Calu3 (cell line): ENCODE measurements at regions of chr12 and their contacts with region 1.

Region 1: DNA sequence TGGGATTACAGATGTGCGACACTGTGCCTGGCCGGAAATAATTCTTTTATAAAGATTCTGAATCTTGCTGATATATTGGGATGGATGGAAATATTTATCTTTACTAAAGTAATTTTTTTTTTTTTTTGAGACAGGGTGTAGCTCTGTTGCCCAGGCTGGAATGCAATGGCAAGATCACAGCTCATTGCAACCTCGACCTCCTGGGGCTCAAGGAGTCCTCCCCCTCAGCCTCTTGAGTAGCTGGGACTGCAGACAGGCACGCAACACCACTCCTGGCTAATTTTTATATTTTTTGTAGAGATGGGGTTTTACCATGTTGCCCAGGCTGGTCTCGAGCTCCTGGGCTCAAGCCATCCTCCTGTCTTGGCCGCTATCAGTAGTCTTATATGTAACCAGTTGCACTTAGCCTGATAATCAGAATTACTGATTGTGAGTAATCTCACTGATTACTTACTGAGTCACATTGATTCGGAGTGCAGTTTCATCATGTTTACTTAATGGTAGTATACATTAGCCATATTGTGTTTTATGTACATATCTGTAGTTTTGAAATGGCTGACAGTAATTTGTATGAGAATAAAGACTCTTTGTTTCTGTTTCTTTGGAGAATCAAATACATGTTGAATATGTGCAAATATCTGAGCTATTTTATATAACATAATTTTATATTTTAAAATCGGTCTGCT is 50.4 kb upstream of the LRTM2 start:
- DNase-seq: no peak
- H3K4me3 Mint-ChIP-seq: no peak overlapping the region
- H3K27ac Mint-ChIP-seq: no peak overlapping the region
- H3K4me1 Mint-ChIP-seq: peaks cover 28% of the 10 kb centered on the region
- H3K27me3 Mint-ChIP-seq: no peaks in the 10 kb centered on the region
- CTCF ChIP-seq: no peak

Region 2: GRCh38 chr12:1690578-1691122 is 79.3 kb before region 1 on chr12 and contains the start of gene ADIPOR2:
- CTCF ChIA-PET with region 1: no interaction called
- intact Hi-C with region 1: loop called (anchors 5 kb)
- DNase-seq: peak; percentile 95
- H3K4me3 Mint-ChIP-seq: peak within 1 kb of the TSS; percentile 88
- H3K27ac Mint-ChIP-seq: peak within 1 kb of the TSS; percentile 89
- H3K4me1 Mint-ChIP-seq: peaks cover 23% of the 10 kb centered on the region
- H3K27me3 Mint-ChIP-seq: peaks cover 6% of the 10 kb centered on the region
- CTCF ChIP-seq: no peak
- total RNA-seq, gene ADIPOR2: 88.5 and 90.3 TPM in 2 replicates

Region 3: GRCh38 chr12:1791104-1791841 is 21.3 kb after region 1 on chr12:
- CTCF ChIA-PET with region 1: no interaction called
- intact Hi-C with region 1: no loop called
- DNase-seq: peak; percentile 57
- H3K4me3 Mint-ChIP-seq: no peak overlapping the region
- H3K27ac Mint-ChIP-seq: no peak overlapping the region
- H3K4me1 Mint-ChIP-seq: no peaks in the 10 kb centered on the region
- H3K27me3 Mint-ChIP-seq: no peaks in the 10 kb centered on the region
- CTCF ChIP-seq: peak; percentile 56